Heart right ventricle (tissue), 16 donors: ENCODE measurements at regions of chr6 and their contacts with region 1.

Region 1: DNA sequence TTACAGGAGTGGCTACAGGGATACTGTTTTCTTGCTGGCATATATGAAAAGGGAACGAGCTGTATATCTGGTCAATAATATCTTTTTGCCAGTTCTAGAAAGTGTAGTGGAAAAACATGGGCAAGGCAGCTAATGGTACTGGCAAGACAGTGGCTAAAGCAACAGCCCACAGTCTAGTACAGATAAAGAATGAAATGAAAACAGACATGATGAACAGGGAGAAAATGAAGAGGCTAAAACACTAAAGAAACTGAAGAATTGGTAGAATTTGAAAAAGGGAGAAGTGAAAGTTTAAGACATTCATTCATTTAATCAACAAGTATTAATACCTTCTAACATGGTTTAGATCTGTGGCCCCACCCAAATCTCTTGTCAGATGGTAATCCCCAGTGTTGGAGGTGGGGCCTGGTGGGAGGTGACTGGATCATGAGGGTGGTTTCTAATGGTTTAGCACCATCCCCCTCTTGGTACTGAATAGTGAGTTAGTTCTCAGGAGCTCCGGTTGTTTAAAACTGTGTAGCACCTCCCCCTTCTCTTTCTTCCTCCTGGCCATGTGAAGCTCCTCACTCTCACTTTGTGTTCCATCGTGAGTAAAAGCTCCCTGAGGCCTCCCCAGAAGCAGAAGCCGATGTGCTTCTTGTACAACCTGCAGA is 18.1 kb downstream of the FAM184A start:
- DNase-seq: no peak
- ATAC-seq: no peak
- H3K4me3 ChIP-seq: no peak overlapping the region
- H3K27ac ChIP-seq: no peak overlapping the region
- H3K4me1 ChIP-seq: no peaks in the 10 kb centered on the region
- H3K27me3 ChIP-seq: no peaks in the 10 kb centered on the region
- CTCF ChIP-seq: no peak

Region 2: DNA sequence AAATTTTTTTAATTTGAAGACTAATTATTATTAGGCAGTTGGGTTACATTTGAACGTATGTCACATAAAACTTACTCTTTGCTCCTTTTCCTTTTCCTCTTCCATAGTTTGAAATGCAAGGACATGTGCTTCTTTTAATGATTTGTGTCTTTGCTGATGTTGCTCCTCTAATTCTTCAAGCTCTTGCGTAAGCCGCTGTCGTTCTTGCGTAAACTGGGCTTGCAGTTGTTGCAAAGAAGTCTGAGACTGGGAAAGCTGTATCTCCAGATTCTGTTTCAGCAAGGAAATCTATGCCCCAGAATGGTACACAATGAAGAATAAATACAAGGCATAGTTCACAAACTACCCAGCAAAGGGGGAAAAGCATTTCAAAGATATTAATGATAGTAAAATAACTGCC is 80.3 kb before region 1 on chr6:
- intact Hi-C with region 1: no loop called
- DNase-seq: no peak
- ATAC-seq: no peak
- H3K4me3 ChIP-seq: no peak overlapping the region
- H3K27ac ChIP-seq: no peak overlapping the region
- H3K4me1 ChIP-seq: peaks cover 0 to 6% (median 0%) of the 10 kb centered on the region in 9 donors
- H3K27me3 ChIP-seq: no peaks in the 10 kb centered on the region
- CTCF ChIP-seq: no peak

Region 3: GRCh38 chr6:119879731-119880130 is 819.4 kb after region 1 on chr6:
- intact Hi-C with region 1: loop called in 1 of 10 experiments (anchors 5 kb)
- DNase-seq: no peak
- ATAC-seq: no peak
- H3K4me3 ChIP-seq: no peak overlapping the region
- H3K27ac ChIP-seq: no peak overlapping the region
- H3K4me1 ChIP-seq: no peaks in the 10 kb centered on the region
- H3K27me3 ChIP-seq: no peaks in the 10 kb centered on the region
- CTCF ChIP-seq: no peak